Heart right ventricle (tissue), 16 donors: ENCODE measurements at regions of chr11 and their contacts with region 1.

Region 1: DNA sequence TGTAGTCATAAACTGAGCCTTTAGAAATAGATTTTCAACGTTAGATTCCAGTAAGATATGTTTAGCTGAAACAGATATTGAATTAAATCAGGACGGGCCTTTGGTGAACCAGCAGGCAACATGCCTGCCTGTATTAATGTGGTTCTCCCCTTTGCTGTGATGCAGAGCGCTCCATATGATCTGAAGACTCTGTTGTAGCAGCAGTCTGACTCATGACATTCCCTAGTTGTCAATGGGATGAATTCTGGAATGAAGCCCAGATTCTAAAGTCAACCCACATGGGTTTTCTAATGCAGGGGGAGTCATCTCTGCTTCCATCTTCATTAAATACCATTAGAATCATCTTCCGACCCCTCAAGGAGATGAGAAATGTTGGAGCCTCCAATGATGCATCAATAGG is 864.5 kb downstream of the NTM start:
- DNase-seq: no peak
- ATAC-seq: no peak
- H3K4me3 ChIP-seq: no peak overlapping the region
- H3K27ac ChIP-seq: no peak overlapping the region
- H3K4me1 ChIP-seq: no peaks in the 10 kb centered on the region
- H3K27me3 ChIP-seq: peaks cover 0 to 6% (median 0%) of the 10 kb centered on the region in 7 donors
- CTCF ChIP-seq: no peak

Region 2: DNA sequence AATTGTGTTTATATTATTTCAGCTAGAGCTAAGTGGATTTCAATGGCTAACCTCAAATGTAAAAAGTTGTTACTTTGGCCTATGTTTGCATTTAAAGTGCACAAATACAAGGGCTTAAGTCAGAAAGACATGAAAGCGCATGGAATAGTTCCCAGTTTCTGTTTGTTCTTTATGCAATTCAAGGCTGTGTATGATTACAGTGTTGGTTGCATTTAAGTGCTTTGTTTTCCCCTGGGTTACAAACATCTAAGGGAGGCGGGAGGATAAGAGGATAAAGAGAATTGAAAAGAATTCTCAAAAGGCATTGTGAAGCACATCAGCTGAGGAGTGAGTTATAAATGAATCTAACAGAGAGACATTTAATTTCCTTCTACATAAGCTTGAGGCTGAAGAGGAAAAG is 411.1 kb before region 1 on chr11:
- intact Hi-C with region 1: no loop called
- DNase-seq: no peak
- ATAC-seq: no peak
- H3K4me3 ChIP-seq: no peak overlapping the region
- H3K27ac ChIP-seq: no peak overlapping the region
- H3K4me1 ChIP-seq: peaks cover 0 to 5% (median 0%) of the 10 kb centered on the region in 9 donors
- H3K27me3 ChIP-seq: peaks cover 0 to 56% (median 26%) of the 10 kb centered on the region in 7 donors
- CTCF ChIP-seq: no peak

Region 3: DNA sequence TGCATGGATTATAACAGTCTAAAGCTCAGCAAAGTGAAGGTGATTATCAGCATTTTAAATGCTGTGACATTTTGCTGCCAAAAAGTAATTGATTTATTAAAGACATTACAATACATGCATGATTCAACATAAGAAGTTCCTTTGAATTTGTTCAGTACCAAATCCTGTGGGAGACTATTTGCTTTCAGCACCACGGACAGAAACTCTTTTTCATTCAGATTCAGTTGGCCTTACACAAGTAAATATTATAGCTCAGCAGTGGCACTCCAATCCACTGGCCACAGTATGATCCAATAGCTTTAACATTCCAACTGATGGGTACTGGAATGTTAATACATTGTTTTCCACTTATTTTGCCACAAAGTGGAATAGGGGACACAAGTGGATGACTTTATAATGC is 57.8 kb before region 1 on chr11:
- intact Hi-C with region 1: no loop called
- DNase-seq: peak in 1 of 2 donors; percentile 8
- ATAC-seq: no peak
- H3K4me3 ChIP-seq: no peak overlapping the region
- H3K27ac ChIP-seq: no peak overlapping the region
- H3K4me1 ChIP-seq: no peaks in the 10 kb centered on the region
- H3K27me3 ChIP-seq: peaks cover 0 to 3% (median 0%) of the 10 kb centered on the region in 7 donors
- CTCF ChIP-seq: no peak

Region 4: GRCh38 chr11:132289590-132290256 is 54.8 kb after region 1 on chr11:
- intact Hi-C with region 1: loop called in 1 of 10 experiments (anchors 10 kb)
- DNase-seq: no peak
- ATAC-seq: no peak
- H3K4me3 ChIP-seq: no peak overlapping the region
- H3K27ac ChIP-seq: no peak overlapping the region
- H3K4me1 ChIP-seq: peaks cover 0 to 13% (median 6%) of the 10 kb centered on the region in 9 donors
- H3K27me3 ChIP-seq: no peaks in the 10 kb centered on the region
- CTCF ChIP-seq: no peak